Ascending aorta (tissue), 2 donors: ENCODE measurements at regions of chr13 and their contacts with region 1.

Region 1: DNA sequence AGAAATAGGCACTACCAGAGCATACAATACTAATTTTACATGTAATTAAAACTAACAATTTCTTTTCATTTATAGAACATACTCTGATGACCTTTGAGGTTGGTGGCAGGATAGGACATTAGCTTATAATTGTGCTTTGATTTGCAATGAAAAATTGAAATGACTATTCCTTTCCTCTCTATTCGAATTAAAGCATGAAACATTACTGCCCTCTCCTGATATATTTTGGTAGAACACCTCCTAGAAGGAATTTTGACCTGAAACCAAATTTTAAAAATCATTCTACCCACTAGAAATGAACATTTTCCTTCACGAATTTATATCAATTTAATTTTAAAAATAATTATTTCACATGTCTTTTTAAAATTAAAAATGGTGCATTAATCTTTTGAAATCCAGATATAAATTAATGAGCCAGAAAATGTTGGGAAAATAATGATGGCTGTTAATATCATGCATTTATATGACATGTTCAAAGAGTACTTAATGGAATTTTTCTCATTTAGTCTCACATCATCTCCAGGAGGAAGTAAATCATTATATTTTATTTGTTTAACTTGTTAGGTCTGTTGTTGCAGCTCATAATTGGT is 556.3 kb upstream of the ARGLU1 start:
- DNase-seq: no peak
- H3K4me3 ChIP-seq: no peak overlapping the region
- H3K27ac ChIP-seq: no peak overlapping the region
- H3K4me1 ChIP-seq: no peaks in the 10 kb centered on the region
- H3K27me3 ChIP-seq: no peaks in the 10 kb centered on the region
- CTCF ChIP-seq: peak; percentile 52 to 75 (median 64)

Region 2: GRCh38 chr13:106619688-106620555 is 504.3 kb before region 1 on chr13:
- intact Hi-C with region 1: loop called (anchors 5 kb)
- DNase-seq: no peak
- H3K4me3 ChIP-seq: no peak overlapping the region
- H3K27ac ChIP-seq: no peak overlapping the region
- H3K4me1 ChIP-seq: no peaks in the 10 kb centered on the region
- H3K27me3 ChIP-seq: no peaks in the 10 kb centered on the region
- CTCF ChIP-seq: peak; percentile 47 to 76 (median 69)